Motor neuron (in vitro differentiated cells): ENCODE measurements at regions of chr2 and their contacts with region 1.

Region 1: GRCh38 chr2:69816923-69817542 is 12.4 kb upstream of the GMCL1 start:
- ATAC-seq: peak in 7 of 8 experiments; percentile 35 to 69 (median 54)
- H3K4me3 ChIP-seq: no peak overlapping the region
- H3K27ac ChIP-seq: no peak overlapping the region
- H3K4me1 ChIP-seq: no peaks in the 10 kb centered on the region

Region 2: DNA sequence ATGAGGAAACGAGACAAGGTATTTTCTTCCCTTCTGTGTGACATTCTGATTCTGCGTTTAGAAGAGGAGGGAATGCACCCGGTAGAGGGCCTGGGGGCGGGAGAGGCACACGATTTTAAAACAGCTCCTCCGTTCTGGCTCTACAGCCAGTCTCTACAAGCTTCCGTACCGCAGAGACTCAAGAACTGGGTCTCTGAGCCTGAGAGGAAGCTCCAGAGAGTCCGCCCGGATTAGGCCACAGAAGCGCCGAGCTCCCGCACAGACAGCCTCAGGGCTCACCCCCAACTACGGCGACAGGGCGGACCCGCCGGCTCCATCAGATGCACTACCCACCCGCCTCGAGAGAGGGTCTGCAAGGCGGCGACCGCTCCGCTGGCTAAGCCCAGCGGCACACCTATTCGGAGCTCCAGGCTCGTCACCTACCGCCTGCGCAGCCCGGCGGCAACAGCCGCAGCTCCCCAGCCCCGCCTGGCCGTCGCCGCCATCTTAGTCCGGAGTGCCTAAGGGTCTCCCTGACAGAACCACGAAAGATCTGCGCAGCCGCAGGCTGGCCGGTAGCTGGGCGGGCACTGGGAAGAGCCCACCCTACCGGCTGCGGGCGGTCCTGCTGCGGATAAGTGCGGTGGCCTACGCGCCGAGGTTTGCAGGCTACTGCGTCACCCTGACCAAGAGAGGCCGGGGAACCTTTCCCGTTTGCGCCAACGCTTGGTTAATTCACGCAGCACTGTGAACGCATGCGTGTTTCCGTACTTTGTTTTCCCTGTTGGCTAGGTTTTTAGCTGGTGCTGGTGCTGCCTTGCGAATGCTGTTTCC is 379.9 kb before region 1 on chr2 and contains the start of gene NFU1:
- in situ Hi-C with region 1: no loop called
- ATAC-seq: peak; percentile 91 to 98 (median 98)
- H3K4me3 ChIP-seq: peak within 1 kb of the TSS; percentile 69 to 87 (median 79)
- H3K27ac ChIP-seq: peak within 1 kb of the TSS; percentile 94
- H3K4me1 ChIP-seq: peaks cover 8 to 12% of the 10 kb centered on the region in 2 donors
- total RNA-seq, gene NFU1: 33.6 to 84.1 (median 62.4) TPM

Region 3: DNA sequence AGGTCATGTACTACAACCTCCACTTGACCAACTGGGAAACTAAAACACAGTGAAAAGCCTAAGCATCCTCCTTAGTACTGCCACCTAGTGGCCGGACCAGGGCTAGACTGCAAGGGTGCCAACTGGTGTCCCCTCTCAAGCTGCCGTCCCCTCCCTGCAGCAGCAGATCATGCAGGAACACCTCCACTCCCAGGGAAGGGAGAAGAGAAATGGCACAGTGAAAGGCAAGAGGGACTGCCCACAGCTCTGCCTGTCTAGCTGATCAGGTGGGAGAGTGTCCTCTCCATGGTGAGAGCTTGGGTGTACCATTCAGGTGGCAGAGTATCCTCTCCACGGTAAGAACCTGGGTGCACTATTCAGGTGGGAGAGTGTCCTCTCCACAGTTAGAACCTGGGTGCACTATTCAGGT is 251.6 kb before region 1 on chr2:
- in situ Hi-C with region 1: loop called in 1 of 9 experiments (anchors 25 kb)
- ATAC-seq: peak in 4 of 8 experiments; percentile 37 to 77 (median 64)
- H3K4me3 ChIP-seq: no peak overlapping the region
- H3K27ac ChIP-seq: no peak overlapping the region
- H3K4me1 ChIP-seq: no peaks in the 10 kb centered on the region

Region 4: GRCh38 chr2:69625078-69625795 is 191.8 kb before region 1 on chr2:
- in situ Hi-C with region 1: no loop called
- ATAC-seq: peak in 3 of 8 experiments; percentile 32 to 59 (median 51)
- H3K4me3 ChIP-seq: no peak overlapping the region
- H3K27ac ChIP-seq: no peak overlapping the region
- H3K4me1 ChIP-seq: peaks cover 0 to 2% of the 10 kb centered on the region in 2 donors